ENCODE measurements at regions of chr14 and their contacts with region 1.

Region 1: GRCh38 chr14:94936401-94936892 is 166.5 kb upstream of the GSC start:
- DNase-seq: peak; percentile 96
- H3K4me3 ChIP-seq: peak overlapping the region; percentile 25
- H3K27ac ChIP-seq: peak overlapping the region; percentile 82
- H3K4me1 ChIP-seq: peaks cover 20% of the 10 kb centered on the region
- H3K27me3 ChIP-seq: no peaks in the 10 kb centered on the region
- CTCF ChIP-seq: no peak

Region 2: GRCh38 chr14:94728950-94729349 is 207.5 kb before region 1 on chr14:
- CTCF ChIA-PET with region 1: no interaction called
- POLR2A ChIA-PET with region 1: no interaction called
- intact Hi-C with region 1: no loop called
- DNase-seq: no peak
- H3K4me3 ChIP-seq: no peak overlapping the region
- H3K27ac ChIP-seq: no peak overlapping the region
- H3K4me1 ChIP-seq: no peaks in the 10 kb centered on the region
- H3K27me3 ChIP-seq: no peaks in the 10 kb centered on the region
- CTCF ChIP-seq: no peak

Region 3: GRCh38 chr14:94867946-94868771 is 68.3 kb before region 1 on chr14:
- CTCF ChIA-PET with region 1: no interaction called
- POLR2A ChIA-PET with region 1: no interaction called
- intact Hi-C with region 1: loop called (anchors 2 kb)
- DNase-seq: peak; percentile 53
- H3K4me3 ChIP-seq: no peak overlapping the region
- H3K27ac ChIP-seq: no peak overlapping the region
- H3K4me1 ChIP-seq: peaks cover 8% of the 10 kb centered on the region
- H3K27me3 ChIP-seq: no peaks in the 10 kb centered on the region
- CTCF ChIP-seq: no peak

Region 4: GRCh38 chr14:95085326-95085725 is 148.9 kb after region 1 on chr14:
- CTCF ChIA-PET with region 1: no interaction called
- POLR2A ChIA-PET with region 1: no interaction called
- intact Hi-C with region 1: no loop called
- DNase-seq: no peak
- H3K4me3 ChIP-seq: no peak overlapping the region
- H3K27ac ChIP-seq: no peak overlapping the region
- H3K4me1 ChIP-seq: peaks cover 14% of the 10 kb centered on the region
- H3K27me3 ChIP-seq: no peaks in the 10 kb centered on the region
- CTCF ChIP-seq: no peak

Region 5: GRCh38 chr14:95340201-95340697 is 403.8 kb after region 1 on chr14:
- CTCF ChIA-PET with region 1: no interaction called
- POLR2A ChIA-PET with region 1: no interaction called
- intact Hi-C with region 1: no loop called
- DNase-seq: peak; percentile 36
- H3K4me3 ChIP-seq: no peak overlapping the region
- H3K27ac ChIP-seq: no peak overlapping the region
- H3K4me1 ChIP-seq: no peaks in the 10 kb centered on the region
- H3K27me3 ChIP-seq: no peaks in the 10 kb centered on the region
- CTCF ChIP-seq: no peak